ENCODE measurements at regions of chr1 and their contacts with region 1.

Region 1: GRCh38 chr1:161792740-161793139 is 26.6 kb downstream of the ATF6 start:
- H3K4me3 ChIP-seq: no peak overlapping the region
- H3K27ac ChIP-seq: no peak overlapping the region
- H3K4me1 ChIP-seq: no peaks in the 10 kb centered on the region
- CTCF ChIP-seq: peak; percentile 49; the same call in 1 of the 2 replicates

Region 2: DNA sequence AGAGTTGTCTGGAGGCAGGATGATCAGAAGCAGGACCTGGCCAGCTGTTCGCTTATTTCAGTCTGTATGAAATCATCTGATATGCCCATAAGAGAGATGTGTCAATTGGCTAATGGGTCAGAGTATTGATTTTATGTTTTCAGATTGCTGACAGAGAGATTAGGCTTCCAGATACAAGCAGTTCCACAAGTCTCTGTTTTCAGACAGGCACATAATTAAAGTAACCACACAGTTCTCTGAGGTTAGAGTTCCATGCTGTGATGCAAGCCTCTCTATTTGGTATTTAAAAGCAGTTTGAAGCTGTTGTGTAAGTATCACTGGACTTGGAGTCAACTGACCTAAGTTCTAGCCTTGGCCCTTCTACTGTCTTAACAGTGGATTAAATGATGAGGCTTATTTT is 23.5 kb after region 1 on chr1:
- CTCF ChIA-PET with region 1: interaction called, 8 read pairs
- POLR2A ChIA-PET with region 1: interaction called, 12 read pairs
- H3K4me3 ChIP-seq: no peak overlapping the region
- H3K27ac ChIP-seq: no peak overlapping the region
- H3K4me1 ChIP-seq: no peaks in the 10 kb centered on the region
- CTCF ChIP-seq: no peak

Region 3: GRCh38 chr1:161910604-161911003 is 117.9 kb after region 1 on chr1:
- CTCF ChIA-PET with region 1: interaction called, 10 read pairs
- POLR2A ChIA-PET with region 1: no interaction called
- H3K4me3 ChIP-seq: no peak overlapping the region
- H3K27ac ChIP-seq: no peak overlapping the region
- H3K4me1 ChIP-seq: peaks cover 13% of the 10 kb centered on the region
- CTCF ChIP-seq: no peak

Region 4: GRCh38 chr1:162023547-162024501 is 231.1 kb after region 1 on chr1 and contains the start of gene OLFML2B:
- CTCF ChIA-PET with region 1: interaction called, 24 read pairs
- POLR2A ChIA-PET with region 1: interaction called, 3 read pairs
- H3K4me3 ChIP-seq: peak within 1 kb of the TSS; percentile 43
- H3K27ac ChIP-seq: no peak within 1 kb of the TSS; the same call in 1 of the 2 replicates
- H3K4me1 ChIP-seq: peaks cover 12% of the 10 kb centered on the region
- CTCF ChIP-seq: no peak; the same call in 1 of the 2 replicates

Region 5: DNA sequence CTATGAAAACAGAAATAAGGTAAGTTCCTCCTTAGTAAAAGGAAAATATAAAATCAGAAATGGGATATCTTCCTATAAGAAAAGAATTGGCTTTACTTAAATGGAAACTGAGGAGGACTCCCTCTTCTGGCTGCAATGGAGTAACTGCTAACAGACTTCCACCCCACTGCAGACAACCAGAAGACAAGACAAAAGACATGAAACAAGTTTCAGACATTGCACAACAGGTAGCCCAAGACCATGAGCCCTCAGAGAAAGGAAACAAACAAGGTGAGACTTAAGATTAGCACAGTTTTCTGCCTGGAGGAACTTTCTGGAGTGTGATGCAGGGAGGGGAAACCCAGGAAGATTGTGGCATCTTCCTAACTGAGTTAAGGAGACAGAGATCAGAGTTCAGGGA is 247.9 kb after region 1 on chr1:
- CTCF ChIA-PET with region 1: interaction called, 239 read pairs
- POLR2A ChIA-PET with region 1: interaction called, 17 read pairs
- H3K4me3 ChIP-seq: no peak overlapping the region
- H3K27ac ChIP-seq: no peak overlapping the region
- H3K4me1 ChIP-seq: no peaks in the 10 kb centered on the region
- CTCF ChIP-seq: no peak